PC-9 (cell line): ENCODE measurements at regions of chr11 and their contacts with region 1.

Region 1: GRCh38 chr11:88543902-88544655 is 206.5 kb upstream of the CTSC start:
- DNase-seq: peak; percentile 80 to 81
- H3K4me3 ChIP-seq: no peak overlapping the region
- H3K27ac ChIP-seq: no peak overlapping the region
- H3K4me1 ChIP-seq: peaks cover 3% of the 10 kb centered on the region
- H3K27me3 ChIP-seq: no peaks in the 10 kb centered on the region
- CTCF ChIP-seq: peak; percentile 99

Region 2: GRCh38 chr11:87352759-87353707 is 1191.0 kb before region 1 on chr11:
- CTCF ChIA-PET with region 1: no interaction called
- POLR2A ChIA-PET with region 1: no interaction called
- intact Hi-C with region 1: loop called (anchors 1 kb)
- DNase-seq: peak; percentile 62 to 79
- H3K4me3 ChIP-seq: no peak overlapping the region
- H3K27ac ChIP-seq: no peak overlapping the region
- H3K4me1 ChIP-seq: no peaks in the 10 kb centered on the region
- H3K27me3 ChIP-seq: no peaks in the 10 kb centered on the region
- CTCF ChIP-seq: peak; percentile 99

Region 3: DNA sequence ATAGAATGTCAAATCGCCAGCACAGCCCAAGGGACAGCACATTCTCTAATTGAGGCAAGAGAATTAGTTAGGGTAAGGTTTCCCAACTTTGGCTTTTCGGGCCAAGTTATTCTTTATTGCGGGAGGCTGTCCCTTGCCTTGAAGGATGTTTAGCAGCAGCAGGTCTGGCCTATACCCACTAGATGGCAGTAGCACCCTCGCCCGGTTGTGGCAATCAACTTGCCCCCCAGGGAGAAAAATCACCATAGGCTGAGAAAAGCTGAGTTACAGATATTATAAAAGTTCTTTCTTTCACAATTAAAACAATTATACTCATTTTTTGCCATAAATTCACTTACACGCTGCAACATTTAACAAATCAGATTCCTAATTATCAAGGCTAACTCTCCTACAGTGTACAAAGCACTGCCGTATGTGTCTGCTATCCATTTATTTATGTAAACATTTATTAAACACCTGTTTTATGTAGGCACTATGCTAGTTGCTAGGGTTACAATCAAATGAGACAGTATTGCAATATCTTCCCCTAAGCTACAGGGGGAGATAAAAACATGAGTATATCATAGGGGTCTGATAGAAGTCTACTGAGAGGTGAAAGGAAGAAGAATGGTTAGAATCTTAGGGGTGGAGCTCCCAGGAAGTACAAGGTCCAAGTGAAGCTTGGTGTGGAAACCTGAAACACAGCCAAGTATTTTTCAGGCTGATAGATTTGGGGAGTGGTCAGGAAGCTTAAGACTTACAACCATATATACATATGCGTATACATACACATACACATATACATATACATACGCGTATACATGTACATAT is 821.1 kb before region 1 on chr11:
- CTCF ChIA-PET with region 1: no interaction called
- POLR2A ChIA-PET with region 1: no interaction called
- intact Hi-C with region 1: loop called (anchors 2 kb)
- DNase-seq: peak; percentile 10 to 28
- H3K4me3 ChIP-seq: no peak overlapping the region
- H3K27ac ChIP-seq: no peak overlapping the region
- H3K4me1 ChIP-seq: no peaks in the 10 kb centered on the region
- H3K27me3 ChIP-seq: no peaks in the 10 kb centered on the region
- CTCF ChIP-seq: peak; percentile 78

Region 4: GRCh38 chr11:88016392-88017170 is 527.5 kb before region 1 on chr11:
- CTCF ChIA-PET with region 1: interaction called, 8 read pairs
- POLR2A ChIA-PET with region 1: no interaction called
- intact Hi-C with region 1: loop called (anchors 1 kb)
- DNase-seq: peak; percentile 62 to 79
- H3K4me3 ChIP-seq: no peak overlapping the region
- H3K27ac ChIP-seq: no peak overlapping the region
- H3K4me1 ChIP-seq: 0 out of 2 replicates have a peak, but pooled peaks cover 2% of the 10 kb centered on the region
- H3K27me3 ChIP-seq: no peaks in the 10 kb centered on the region
- CTCF ChIP-seq: peak; percentile 95

Region 5: DNA sequence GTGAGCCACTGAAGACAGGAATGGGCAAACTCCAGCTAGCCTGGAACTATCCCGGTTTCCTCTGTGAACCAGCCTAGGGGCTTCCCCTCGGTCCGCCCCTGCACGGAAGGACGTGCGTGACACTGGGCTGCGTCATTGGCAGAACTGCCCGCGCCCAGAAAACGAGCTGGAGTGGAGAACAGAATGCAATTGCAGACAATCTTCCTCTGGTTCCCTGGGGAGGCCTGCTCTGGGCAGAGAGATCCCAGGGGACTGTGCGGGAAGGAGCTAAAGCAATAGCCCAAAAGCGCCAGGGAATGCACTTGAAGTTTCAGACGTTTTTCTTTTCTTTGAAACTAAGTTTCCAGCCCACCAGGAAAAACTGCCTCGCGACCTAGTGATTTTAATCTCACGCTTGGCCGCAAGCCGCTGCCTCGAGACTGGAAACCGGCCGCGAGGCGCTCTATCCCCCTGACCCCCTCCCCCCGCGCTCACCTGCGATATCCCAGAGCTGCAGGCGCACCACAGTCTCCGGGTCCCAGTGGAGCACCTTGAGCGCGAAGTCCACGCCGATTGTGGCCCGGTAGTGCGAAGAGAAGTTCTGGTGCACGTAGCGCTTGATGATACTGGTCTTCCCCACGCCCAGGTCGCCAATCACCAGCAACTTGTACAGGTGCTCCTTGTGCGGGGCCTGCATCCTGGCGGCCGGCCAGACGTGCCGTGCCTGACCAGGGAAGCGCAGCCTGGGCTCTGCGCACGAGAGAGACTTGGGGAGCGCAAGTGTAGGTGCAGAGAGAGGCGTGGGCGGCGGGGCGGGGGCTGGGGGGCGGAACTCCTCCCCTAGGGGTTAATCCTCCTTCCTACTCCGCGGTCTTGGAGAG is 369.1 kb before region 1 on chr11 and contains the start of gene RAB38:
- CTCF ChIA-PET with region 1: no interaction called
- POLR2A ChIA-PET with region 1: no interaction called
- intact Hi-C with region 1: loop called (anchors 5 kb)
- DNase-seq: peak; percentile 70 to 72
- H3K4me3 ChIP-seq: peak within 1 kb of the TSS; percentile 60
- H3K27ac ChIP-seq: peak within 1 kb of the TSS; percentile 15
- H3K4me1 ChIP-seq: peaks cover 40% of the 10 kb centered on the region
- H3K27me3 ChIP-seq: no peaks in the 10 kb centered on the region
- CTCF ChIP-seq: no peak
- total RNA-seq, gene RAB38: 12.7 and 14.2 TPM in 2 replicates

Region 6: DNA sequence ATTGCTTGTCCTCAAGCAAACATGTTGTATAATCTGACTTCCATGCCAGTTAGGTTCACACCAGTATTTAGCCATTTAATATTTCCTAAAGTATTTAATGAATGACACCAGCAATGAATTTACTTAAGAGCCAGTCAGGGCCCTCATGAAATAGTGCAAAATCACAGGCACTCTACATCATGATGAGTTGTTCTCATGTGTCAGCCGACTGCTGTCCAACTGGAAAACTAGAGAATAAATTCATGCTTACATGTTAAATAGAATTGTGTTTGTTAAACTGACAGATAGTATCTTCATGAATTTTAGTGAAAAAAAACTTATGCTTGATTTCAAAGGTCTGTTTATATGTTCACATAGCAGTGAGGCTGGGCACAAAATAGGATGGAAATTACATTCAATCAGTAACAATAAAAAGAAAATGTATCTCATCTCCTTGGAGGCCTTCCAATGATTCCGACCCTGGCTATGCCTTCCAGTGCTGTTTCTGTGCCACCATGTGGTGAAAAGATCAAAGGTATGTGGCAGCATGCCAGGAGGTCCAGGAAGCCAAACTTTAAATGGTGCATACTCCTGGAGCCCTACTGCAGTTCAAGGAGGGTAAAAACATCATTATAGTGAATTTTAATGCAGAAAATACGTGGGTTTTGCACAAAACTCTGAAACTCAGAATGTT is 251.8 kb before region 1 on chr11:
- CTCF ChIA-PET with region 1: no interaction called
- POLR2A ChIA-PET with region 1: no interaction called
- intact Hi-C with region 1: loop called (anchors 1 kb)
- DNase-seq: peak in 1 of 2 experiments; percentile 30
- H3K4me3 ChIP-seq: no peak overlapping the region
- H3K27ac ChIP-seq: no peak overlapping the region
- H3K4me1 ChIP-seq: no peaks in the 10 kb centered on the region
- H3K27me3 ChIP-seq: no peaks in the 10 kb centered on the region
- CTCF ChIP-seq: 0 out of 2 replicates have a peak, but pooled peaks have one; percentile 16

Region 7: GRCh38 chr11:88886796-88887195 is 342.7 kb after region 1 on chr11:
- CTCF ChIA-PET with region 1: no interaction called
- POLR2A ChIA-PET with region 1: no interaction called
- intact Hi-C with region 1: loop called (anchors 5 kb)
- DNase-seq: peak in 1 of 2 experiments; percentile 41
- H3K4me3 ChIP-seq: no peak overlapping the region
- H3K27ac ChIP-seq: no peak overlapping the region
- H3K4me1 ChIP-seq: no peaks in the 10 kb centered on the region
- H3K27me3 ChIP-seq: no peaks in the 10 kb centered on the region
- CTCF ChIP-seq: peak; percentile 75